PC-3 (cell line): ENCODE measurements at regions of chr2 and their contacts with region 1.

Region 1: GRCh38 chr2:10783421-10783820 is 29.2 kb downstream of the PDIA6 start:
- DNase-seq: peak; percentile 72
- ATAC-seq: peak; percentile 81
- H3K4me3 ChIP-seq: no peak overlapping the region
- H3K27ac ChIP-seq: no peak overlapping the region
- H3K4me1 ChIP-seq: peaks cover 15% of the 10 kb centered on the region
- H3K27me3 ChIP-seq: no peaks in the 10 kb centered on the region
- CTCF ChIP-seq: no peak

Region 2: DNA sequence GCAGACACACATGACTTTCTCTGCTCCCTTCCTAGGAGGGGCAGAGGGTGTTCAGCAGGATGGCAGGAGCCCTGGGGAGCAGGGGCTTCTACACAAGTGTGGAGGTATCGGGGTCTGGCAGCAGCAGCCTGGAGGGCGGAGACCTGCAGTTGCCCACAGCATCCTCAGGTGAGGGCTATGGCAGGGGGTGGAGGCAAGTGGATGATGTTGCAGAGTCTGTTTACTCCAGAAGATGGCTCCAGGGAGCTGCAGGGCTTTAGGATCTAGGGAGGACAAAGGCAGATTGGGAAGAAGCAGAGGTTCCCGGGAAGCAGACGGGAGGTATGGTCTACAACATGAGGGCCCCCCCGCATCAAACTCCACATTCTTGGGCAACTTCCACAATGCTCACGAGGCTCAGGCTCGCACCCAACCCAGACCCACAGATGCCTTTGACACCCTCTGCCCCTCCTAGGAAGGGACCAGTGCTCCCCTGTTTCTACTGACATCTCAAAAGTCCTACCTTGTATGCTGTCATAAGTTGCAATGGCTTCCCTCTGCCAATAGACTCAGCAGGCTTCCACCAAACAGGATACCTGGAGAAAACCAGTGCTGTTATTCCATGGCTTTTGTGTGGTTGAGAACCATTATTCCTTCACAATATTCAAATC is 74.0 kb before region 1 on chr2:
- CTCF ChIA-PET with region 1: no interaction called
- POLR2A ChIA-PET with region 1: no interaction called
- intact Hi-C with region 1: loop called (anchors 5 kb)
- DNase-seq: peak; percentile 76
- ATAC-seq: peak; percentile 97
- H3K4me3 ChIP-seq: no peak overlapping the region
- H3K27ac ChIP-seq: no peak overlapping the region
- H3K4me1 ChIP-seq: no peaks in the 10 kb centered on the region
- H3K27me3 ChIP-seq: no peaks in the 10 kb centered on the region
- CTCF ChIP-seq: peak; percentile 76

Region 3: GRCh38 chr2:10768063-10768507 is 15.3 kb before region 1 on chr2:
- CTCF ChIA-PET with region 1: no interaction called
- POLR2A ChIA-PET with region 1: no interaction called
- intact Hi-C with region 1: no loop called
- DNase-seq: no peak
- ATAC-seq: no peak
- H3K4me3 ChIP-seq: no peak overlapping the region
- H3K27ac ChIP-seq: no peak overlapping the region
- H3K4me1 ChIP-seq: peaks cover 8% of the 10 kb centered on the region
- H3K27me3 ChIP-seq: no peaks in the 10 kb centered on the region
- CTCF ChIP-seq: no peak